HCT116 (cell line): ENCODE measurements at regions of chr7 and their contacts with region 1.

Region 1: DNA sequence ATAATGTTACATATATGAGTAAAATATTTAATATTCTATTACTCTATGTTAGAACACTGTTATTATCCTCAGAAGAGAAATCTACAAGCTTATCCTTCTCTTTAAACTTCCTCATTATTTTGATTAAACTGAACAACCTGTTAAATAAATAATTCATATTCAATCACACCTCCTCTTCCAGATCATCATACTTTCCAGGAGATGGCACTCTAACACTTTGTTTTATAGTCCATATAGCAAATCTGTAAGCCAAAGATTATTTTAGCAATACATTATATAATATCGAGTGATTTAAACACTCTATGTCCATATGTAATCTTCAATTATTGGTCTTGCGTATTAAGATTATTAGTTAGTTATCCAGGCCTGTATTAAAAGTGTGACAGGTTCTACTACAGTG is 694.1 kb downstream of the ANKRD7 start:
- DNase-seq: peak; percentile 26
- ATAC-seq: peak; percentile 53
- H3K4me3 ChIP-seq: no peak overlapping the region
- H3K27ac ChIP-seq: no peak overlapping the region
- H3K4me1 ChIP-seq: no peaks in the 10 kb centered on the region
- H3K27me3 ChIP-seq: no peaks in the 10 kb centered on the region
- CTCF ChIP-seq: peak; percentile 27 to 57 (median 56); a peak in 4 of 6 replicates
- POLR2A ChIP-seq: no peak
- RAD21 ChIP-seq: peak; percentile 76

Region 2: GRCh38 chr7:118689403-118689802 is 229.2 kb before region 1 on chr7:
- CTCF ChIA-PET with region 1: no interaction called
- POLR2A ChIA-PET with region 1: no interaction called
- RAD21 ChIA-PET with region 1: no interaction called
- intact Hi-C with region 1: no loop called
- DNase-seq: no peak
- ATAC-seq: no peak
- H3K4me3 ChIP-seq: no peak overlapping the region
- H3K27ac ChIP-seq: no peak overlapping the region
- H3K4me1 ChIP-seq: no peaks in the 10 kb centered on the region
- H3K27me3 ChIP-seq: no peaks in the 10 kb centered on the region
- CTCF ChIP-seq: no peak
- POLR2A ChIP-seq: no peak
- RAD21 ChIP-seq: no peak

Region 3: GRCh38 chr7:118802736-118803135 is 115.8 kb before region 1 on chr7:
- CTCF ChIA-PET with region 1: no interaction called
- POLR2A ChIA-PET with region 1: no interaction called
- RAD21 ChIA-PET with region 1: no interaction called
- intact Hi-C with region 1: no loop called
- DNase-seq: no peak
- ATAC-seq: no peak
- H3K4me3 ChIP-seq: no peak overlapping the region
- H3K27ac ChIP-seq: no peak overlapping the region
- H3K4me1 ChIP-seq: no peaks in the 10 kb centered on the region
- H3K27me3 ChIP-seq: no peaks in the 10 kb centered on the region
- CTCF ChIP-seq: no peak
- POLR2A ChIP-seq: no peak
- RAD21 ChIP-seq: no peak

Region 4: GRCh38 chr7:119175911-119176627 is 257.5 kb after region 1 on chr7:
- CTCF ChIA-PET with region 1: interaction called, 11 read pairs
- POLR2A ChIA-PET with region 1: no interaction called
- RAD21 ChIA-PET with region 1: interaction called in 1 of 2 experiments, 3 read pairs
- intact Hi-C with region 1: loop called (anchors 1 kb)
- DNase-seq: peak; percentile 83
- ATAC-seq: peak; percentile 88
- H3K4me3 ChIP-seq: no peak overlapping the region
- H3K27ac ChIP-seq: no peak overlapping the region
- H3K4me1 ChIP-seq: no peaks in the 10 kb centered on the region
- H3K27me3 ChIP-seq: no peaks in the 10 kb centered on the region
- CTCF ChIP-seq: peak; percentile 68 to 83 (median 80); a peak in 5 of 6 replicates
- POLR2A ChIP-seq: no peak
- RAD21 ChIP-seq: peak; percentile 84

Region 5: GRCh38 chr7:119197877-119198527 is 279.4 kb after region 1 on chr7:
- CTCF ChIA-PET with region 1: interaction called, 13 read pairs
- POLR2A ChIA-PET with region 1: no interaction called
- RAD21 ChIA-PET with region 1: no interaction called
- intact Hi-C with region 1: loop called (anchors 5 kb)
- DNase-seq: peak; percentile 29
- ATAC-seq: peak; percentile 93
- H3K4me3 ChIP-seq: no peak overlapping the region
- H3K27ac ChIP-seq: no peak overlapping the region
- H3K4me1 ChIP-seq: no peaks in the 10 kb centered on the region
- H3K27me3 ChIP-seq: no peaks in the 10 kb centered on the region
- CTCF ChIP-seq: peak; percentile 44 to 85 (median 76); a peak in 5 of 6 replicates
- POLR2A ChIP-seq: no peak
- RAD21 ChIP-seq: peak; percentile 66

Region 6: GRCh38 chr7:120272261-120272660 is 1353.7 kb after region 1 on chr7:
- CTCF ChIA-PET with region 1: no interaction called
- POLR2A ChIA-PET with region 1: no interaction called
- RAD21 ChIA-PET with region 1: no interaction called
- intact Hi-C with region 1: loop called (anchors 10 kb)
- DNase-seq: peak; percentile 37
- ATAC-seq: peak; percentile 78
- H3K4me3 ChIP-seq: no peak overlapping the region
- H3K27ac ChIP-seq: no peak overlapping the region
- H3K4me1 ChIP-seq: no peaks in the 10 kb centered on the region
- H3K27me3 ChIP-seq: no peaks in the 10 kb centered on the region
- CTCF ChIP-seq: peak; percentile 59 to 73 (median 61); a peak in 5 of 6 replicates
- POLR2A ChIP-seq: no peak
- RAD21 ChIP-seq: peak; percentile 82

Region 7: DNA sequence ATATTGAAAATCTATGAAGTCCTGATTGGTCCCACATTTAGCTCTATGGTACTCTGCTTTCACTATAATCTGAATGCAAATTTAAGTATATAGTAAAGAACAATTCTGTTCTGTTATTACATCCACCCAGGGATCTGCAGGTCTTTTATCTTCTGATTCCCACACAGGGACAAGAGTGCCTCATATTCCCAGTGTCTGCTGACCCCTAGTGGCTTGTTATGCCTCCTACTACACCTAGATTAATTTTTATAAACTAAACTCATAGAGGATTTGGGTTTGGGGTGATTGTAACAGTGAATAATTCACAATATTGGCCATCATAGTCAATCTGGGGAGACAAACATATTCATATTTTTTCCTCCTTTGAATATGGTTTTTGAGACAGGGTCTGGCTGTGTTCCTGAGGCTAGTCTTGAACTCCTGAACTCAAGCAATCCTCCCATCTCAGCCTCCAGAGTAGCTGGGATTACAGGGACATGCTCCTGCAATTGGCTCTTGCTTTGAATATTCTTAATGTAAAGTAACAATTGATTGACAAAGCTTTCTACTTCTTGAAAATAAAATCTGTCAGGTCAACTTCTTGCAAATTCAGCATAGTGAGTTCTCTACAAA is 1636.5 kb after region 1 on chr7:
- CTCF ChIA-PET with region 1: no interaction called
- POLR2A ChIA-PET with region 1: no interaction called
- RAD21 ChIA-PET with region 1: no interaction called
- intact Hi-C with region 1: loop called (anchors 10 kb)
- DNase-seq: peak; percentile 47
- ATAC-seq: peak; percentile 92
- H3K4me3 ChIP-seq: no peak overlapping the region
- H3K27ac ChIP-seq: no peak overlapping the region
- H3K4me1 ChIP-seq: no peaks in the 10 kb centered on the region
- H3K27me3 ChIP-seq: no peaks in the 10 kb centered on the region
- CTCF ChIP-seq: peak; percentile 69 to 89 (median 70); a peak in 5 of 6 replicates
- POLR2A ChIP-seq: no peak
- RAD21 ChIP-seq: peak; percentile 88

Region 8: DNA sequence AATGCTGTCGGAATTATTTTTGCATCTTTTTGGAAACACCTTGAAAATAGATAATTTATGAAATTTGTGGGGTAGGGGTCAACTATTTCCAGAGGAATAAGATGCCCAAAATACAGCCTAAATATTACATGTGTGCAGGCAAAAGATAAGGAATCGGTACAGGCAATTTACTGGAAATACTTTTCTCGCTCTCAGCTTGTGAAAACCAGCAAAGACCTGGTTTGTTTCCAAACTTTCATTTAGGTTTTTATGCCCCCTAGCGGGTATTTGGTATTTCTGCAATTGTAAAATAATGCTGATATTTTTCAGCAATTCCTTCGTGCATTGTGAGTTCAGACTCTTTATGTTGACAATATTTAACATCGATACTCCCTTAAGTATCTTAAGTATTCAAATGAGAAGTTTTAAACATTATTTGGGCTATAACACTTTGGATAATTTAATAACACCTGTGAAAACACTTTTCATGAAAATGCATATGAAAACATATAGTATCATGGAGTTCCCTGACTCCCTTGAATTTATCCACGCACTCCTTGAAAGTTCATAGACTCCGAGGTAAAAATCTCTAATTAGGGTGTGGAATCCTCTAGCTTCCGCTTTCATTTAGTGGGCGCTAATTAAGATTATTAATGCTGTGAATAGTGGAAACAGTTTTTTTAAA is 1807.0 kb after region 1 on chr7:
- CTCF ChIA-PET with region 1: interaction called, 3 read pairs
- POLR2A ChIA-PET with region 1: no interaction called
- RAD21 ChIA-PET with region 1: no interaction called
- intact Hi-C with region 1: loop called (anchors 10 kb)
- DNase-seq: peak; percentile 43
- ATAC-seq: no peak; the same call in 1 of the 2 replicates
- H3K4me3 ChIP-seq: no peak overlapping the region
- H3K27ac ChIP-seq: no peak overlapping the region
- H3K4me1 ChIP-seq: peaks cover 0 to 3% of the 10 kb centered on the region in 2 experiments; a peak in 1 of 4 replicates
- H3K27me3 ChIP-seq: no peaks in the 10 kb centered on the region
- CTCF ChIP-seq: peak; percentile 51 to 71 (median 55); a peak in 5 of 6 replicates
- POLR2A ChIP-seq: no peak
- RAD21 ChIP-seq: peak; percentile 73